Calu3 (cell line): ENCODE measurements at regions of chr19 and their contacts with region 1.

Region 1: GRCh38 chr19:51070861-51071406 is 6.0 kb upstream of the KLK13 start:
- DNase-seq: no peak
- H3K4me3 Mint-ChIP-seq: no peak overlapping the region
- H3K27ac Mint-ChIP-seq: no peak overlapping the region
- H3K4me1 Mint-ChIP-seq: no peaks in the 10 kb centered on the region
- H3K27me3 Mint-ChIP-seq: peaks cover 43% of the 10 kb centered on the region
- CTCF ChIP-seq: no peak

Region 2: GRCh38 chr19:49315111-49315510 is 1755.8 kb before region 1 on chr19:
- CTCF ChIA-PET with region 1: no interaction called
- intact Hi-C with region 1: no loop called
- DNase-seq: no peak
- H3K4me3 Mint-ChIP-seq: no peak overlapping the region
- H3K27ac Mint-ChIP-seq: no peak overlapping the region
- H3K4me1 Mint-ChIP-seq: no peaks in the 10 kb centered on the region
- H3K27me3 Mint-ChIP-seq: peaks cover 57% of the 10 kb centered on the region
- CTCF ChIP-seq: no peak

Region 3: GRCh38 chr19:51083783-51084182 is 12.8 kb after region 1 on chr19:
- CTCF ChIA-PET with region 1: interaction called, 10 read pairs
- intact Hi-C with region 1: no loop called
- DNase-seq: no peak
- H3K4me3 Mint-ChIP-seq: no peak overlapping the region
- H3K27ac Mint-ChIP-seq: no peak overlapping the region
- H3K4me1 Mint-ChIP-seq: no peaks in the 10 kb centered on the region
- H3K27me3 Mint-ChIP-seq: peaks cover 48% of the 10 kb centered on the region
- CTCF ChIP-seq: no peak